GM10248 (cell line): ENCODE measurements at regions of chr14 and their contacts with region 1.

Region 1: DNA sequence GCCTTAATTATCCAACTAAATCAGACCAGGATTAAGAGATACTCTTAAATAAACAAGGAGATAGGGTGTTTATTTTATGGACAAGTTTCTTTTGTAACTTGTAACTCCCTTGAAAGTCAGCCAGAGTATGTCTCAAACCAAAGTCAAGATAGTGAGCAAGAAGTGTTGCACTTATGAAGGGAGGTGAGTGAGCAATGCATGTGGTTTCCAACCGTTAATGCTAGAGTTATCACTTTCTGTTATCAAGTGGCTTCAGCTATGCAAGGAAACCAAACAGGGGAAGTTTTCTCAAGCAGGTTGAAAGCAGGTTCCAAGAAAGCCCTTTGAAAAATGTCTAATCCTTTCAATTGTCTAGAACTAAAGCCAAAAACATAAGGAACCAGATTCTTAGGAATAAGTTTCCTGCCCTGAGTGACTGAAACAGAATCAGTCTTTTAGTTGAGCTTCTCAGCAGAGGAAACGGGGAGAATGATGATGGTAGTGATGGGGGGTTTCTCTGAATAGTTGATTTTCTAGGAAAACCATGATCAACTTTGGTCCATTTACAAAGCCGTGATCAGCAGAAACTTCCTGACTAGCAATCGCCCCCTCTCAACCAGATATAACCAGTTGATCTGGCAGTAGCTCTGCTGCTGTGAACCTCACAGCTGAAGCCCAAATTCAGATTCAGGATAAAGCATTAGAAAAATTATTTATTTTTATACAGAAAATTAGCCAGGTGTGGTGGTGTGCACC is 128.4 kb downstream of the DAD1 start:
- DNase-seq: peak; percentile 37
- CTCF ChIP-seq: no peak

Region 2: DNA sequence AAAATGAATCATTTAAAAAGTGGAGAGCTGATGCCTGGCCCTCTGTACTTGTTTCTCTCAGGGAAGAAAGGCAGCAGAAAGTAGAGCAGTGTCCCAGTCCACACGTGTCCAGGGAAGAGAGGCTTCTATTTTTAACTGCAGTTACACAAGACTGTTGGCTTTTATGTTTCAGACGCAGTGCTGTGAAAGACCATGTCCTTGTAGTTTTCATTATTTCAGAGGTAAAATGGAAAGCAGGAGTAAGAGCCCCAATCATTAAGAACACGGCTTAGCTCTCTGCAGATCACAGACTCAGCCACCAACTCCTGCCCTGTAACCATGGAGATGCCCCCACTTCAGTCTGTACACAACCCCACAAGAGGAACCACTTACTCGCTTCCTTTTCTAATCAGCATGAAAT is 207.9 kb before region 1 on chr14:
- CTCF ChIA-PET with region 1: no interaction called
- POLR2A ChIA-PET with region 1: no interaction called
- DNase-seq: no peak
- CTCF ChIP-seq: no peak

Region 3: GRCh38 chr14:22448905-22449599 is 11.6 kb before region 1 on chr14:
- CTCF ChIA-PET with region 1: interaction called, 12 read pairs
- POLR2A ChIA-PET with region 1: no interaction called
- DNase-seq: peak; percentile 38
- CTCF ChIP-seq: no peak

Region 4: DNA sequence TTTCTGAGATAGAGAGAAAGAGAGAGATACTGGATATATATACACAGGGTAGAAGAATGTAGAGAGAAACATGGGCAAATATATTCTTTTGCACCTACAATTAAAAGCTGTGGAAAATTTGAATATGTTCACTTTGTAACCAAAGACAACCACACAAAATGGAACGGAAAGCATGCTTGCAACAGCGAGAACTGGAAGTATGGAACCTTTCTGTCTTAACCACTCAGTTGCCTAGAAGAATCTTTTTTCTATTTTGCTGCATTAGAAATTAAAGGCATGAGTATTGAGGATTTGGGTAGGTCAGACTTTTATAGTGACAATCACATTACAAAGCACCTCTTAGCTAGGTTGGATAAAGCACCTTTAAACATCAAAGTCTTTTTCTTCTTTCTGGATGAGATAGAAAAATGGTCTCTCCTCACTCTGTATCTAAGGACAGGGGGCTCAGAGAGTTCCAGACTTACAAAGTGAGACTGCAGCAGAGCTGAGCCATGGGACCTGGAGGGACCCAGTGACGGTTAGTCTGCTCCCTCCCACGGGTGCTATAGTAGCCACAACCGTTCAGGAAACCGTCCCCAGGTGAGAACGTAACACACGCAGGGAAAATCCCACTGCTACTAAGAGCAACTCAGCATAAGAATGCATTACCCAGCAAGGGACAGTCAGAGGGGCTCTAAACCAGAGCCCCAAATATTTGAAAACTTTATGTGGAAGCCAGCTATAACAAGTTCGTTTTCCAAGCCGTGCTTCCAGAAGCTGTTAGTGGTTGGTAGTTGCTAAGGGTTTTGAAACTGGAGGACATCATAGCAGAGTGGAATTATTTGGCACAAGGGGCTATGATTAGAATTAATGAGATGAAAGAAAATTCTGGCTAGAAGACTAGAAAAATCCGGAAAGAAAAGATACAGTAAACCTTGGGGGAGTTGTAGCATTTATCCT is 31.3 kb after region 1 on chr14:
- CTCF ChIA-PET with region 1: no interaction called
- POLR2A ChIA-PET with region 1: no interaction called
- DNase-seq: peak; percentile 39
- CTCF ChIP-seq: no peak